Ascending aorta (tissue), 2 donors: ENCODE measurements at regions of chr1 and their contacts with region 1.

Region 1: GRCh38 chr1:7704214-7705047 is 66.7 kb upstream of the VAMP3 start:
- DNase-seq: peak; percentile 82 to 96
- H3K4me3 ChIP-seq: peak overlapping the region; percentile 60 to 64
- H3K27ac ChIP-seq: no peak overlapping the region
- H3K4me1 ChIP-seq: peaks cover 3 to 7% of the 10 kb centered on the region in 2 donors
- H3K27me3 ChIP-seq: no peaks in the 10 kb centered on the region
- CTCF ChIP-seq: no peak

Region 2: DNA sequence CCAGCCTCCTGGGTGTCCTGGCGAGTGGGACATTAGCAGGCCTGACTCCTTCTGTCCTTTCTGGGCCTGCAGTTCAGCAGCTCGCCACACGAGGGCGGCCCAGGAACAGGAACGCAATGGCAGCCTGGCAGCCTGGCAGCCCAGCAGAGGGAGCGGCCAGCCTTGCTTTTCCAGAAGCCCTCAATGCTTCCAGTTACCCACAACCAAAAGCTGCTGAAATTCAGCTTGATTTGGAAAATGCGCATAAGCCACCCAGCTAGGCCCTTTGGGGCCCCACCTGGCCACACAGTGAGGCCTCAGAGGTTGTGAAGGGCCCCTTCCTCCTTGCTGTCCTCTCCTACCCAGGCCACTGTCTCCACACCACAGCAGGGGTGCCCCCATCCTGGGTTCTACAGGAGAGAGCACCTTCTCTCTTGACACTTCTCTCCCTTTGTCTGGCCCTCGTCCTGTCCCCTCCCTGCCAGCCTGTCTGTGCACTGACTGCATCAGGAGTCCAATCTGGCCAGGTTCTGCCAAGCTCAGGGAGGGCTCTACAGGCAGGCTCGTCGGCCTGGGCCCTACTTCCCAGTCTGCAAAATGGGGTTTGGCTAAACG is 36.7 kb before region 1 on chr1:
- intact Hi-C with region 1: loop called (anchors 2 kb)
- DNase-seq: peak; percentile 61 to 95
- H3K4me3 ChIP-seq: no peak overlapping the region
- H3K27ac ChIP-seq: no peak overlapping the region
- H3K4me1 ChIP-seq: no peaks in the 10 kb centered on the region
- H3K27me3 ChIP-seq: no peaks in the 10 kb centered on the region
- CTCF ChIP-seq: peak; percentile 99 to 100 (median 100)

Region 3: GRCh38 chr1:7770997-7771822 is 66.8 kb after region 1 on chr1 and contains the start of gene VAMP3:
- intact Hi-C with region 1: loop called (anchors 2 kb)
- DNase-seq: peak; percentile 19 to 92
- H3K4me3 ChIP-seq: peak within 1 kb of the TSS; percentile 88 to 94
- H3K27ac ChIP-seq: peak within 1 kb of the TSS; percentile 85 to 94
- H3K4me1 ChIP-seq: peaks cover 6 to 11% of the 10 kb centered on the region in 2 donors
- H3K27me3 ChIP-seq: no peaks in the 10 kb centered on the region
- CTCF ChIP-seq: no peak
- total RNA-seq, gene VAMP3: 79.1 TPM